Left ventricle myocardium inferior (tissue), 1 donor: ENCODE measurements at regions of chr4 and their contacts with region 1.

Region 1: GRCh38 chr4:139167774-139168444 is 9.1 kb downstream of the ELF2 start:
- DNase-seq: no peak
- H3K4me3 ChIP-seq: no peak overlapping the region
- H3K27ac ChIP-seq: no peak overlapping the region
- H3K4me1 ChIP-seq: peaks cover 81% of the 10 kb centered on the region
- H3K27me3 ChIP-seq: no peaks in the 10 kb centered on the region
- CTCF ChIP-seq: peak; percentile 58

Region 2: GRCh38 chr4:139108567-139109128 is 59.3 kb before region 1 on chr4:
- intact Hi-C with region 1: loop called (anchors 10 kb)
- DNase-seq: no peak
- H3K4me3 ChIP-seq: no peak overlapping the region
- H3K27ac ChIP-seq: no peak overlapping the region
- H3K4me1 ChIP-seq: peaks cover 20% of the 10 kb centered on the region
- H3K27me3 ChIP-seq: no peaks in the 10 kb centered on the region
- CTCF ChIP-seq: no peak

Region 3: GRCh38 chr4:139253713-139254112 is 85.8 kb after region 1 on chr4:
- intact Hi-C with region 1: no loop called
- DNase-seq: no peak
- H3K4me3 ChIP-seq: no peak overlapping the region
- H3K27ac ChIP-seq: no peak overlapping the region
- H3K4me1 ChIP-seq: no peaks in the 10 kb centered on the region
- H3K27me3 ChIP-seq: no peaks in the 10 kb centered on the region
- CTCF ChIP-seq: no peak